H1 (cell line): ENCODE measurements at regions of chr6 and their contacts with region 1.

Region 1: DNA sequence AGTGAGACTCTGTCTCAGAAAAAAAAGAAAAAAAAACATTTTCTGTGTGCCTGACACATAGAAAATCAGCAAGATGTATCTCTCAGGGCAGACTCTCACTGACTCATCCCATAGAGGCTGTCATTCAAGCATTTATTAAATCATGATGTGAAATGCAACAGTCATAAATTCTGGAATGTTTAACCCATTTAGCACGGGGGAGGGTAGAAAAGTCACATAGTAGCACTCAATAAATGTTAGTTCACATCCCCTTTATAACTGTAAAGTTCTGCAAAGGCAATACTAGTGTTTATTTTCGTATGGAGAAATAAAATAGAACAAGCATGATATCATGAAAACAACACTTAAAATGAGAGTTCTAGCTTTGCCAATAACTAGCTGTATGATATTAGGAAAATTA is 15.5 kb upstream of the CARMIL1 start:
- DNase-seq: no peak
- H3K4me3 ChIP-seq: no peak overlapping the region
- H3K27ac ChIP-seq: no peak overlapping the region
- H3K4me1 ChIP-seq: no peaks in the 10 kb centered on the region
- H3K27me3 ChIP-seq: no peaks in the 10 kb centered on the region
- CTCF ChIP-seq: no peak
- EP300 ChIP-seq: no peak
- POLR2A ChIP-seq: no peak
- RAD21 ChIP-seq: no peak

Region 2: DNA sequence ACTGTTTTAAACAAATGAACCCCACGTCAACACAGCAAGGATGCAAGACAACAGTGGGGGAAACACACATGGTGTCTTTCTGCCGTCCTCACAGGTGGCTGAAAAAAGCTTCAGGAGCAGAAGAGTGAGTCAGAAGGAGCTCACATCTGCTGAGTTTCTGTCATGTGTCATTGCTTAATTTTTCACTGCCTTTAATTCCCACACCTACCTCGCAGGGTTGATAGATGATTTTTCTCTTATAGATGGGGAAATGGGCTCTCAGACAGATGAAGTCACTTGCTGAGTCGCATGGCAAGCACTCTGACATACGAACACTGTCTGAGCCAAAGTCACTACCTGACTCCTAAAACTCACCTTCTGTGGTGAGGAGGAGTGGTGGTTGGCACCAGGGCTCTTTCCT is 12.8 kb before region 1 on chr6:
- CTCF ChIA-PET with region 1: interaction called, 21 read pairs
- POLR2A ChIA-PET with region 1: interaction called, 3 read pairs
- DNase-seq: no peak
- H3K4me3 ChIP-seq: no peak overlapping the region
- H3K27ac ChIP-seq: no peak overlapping the region
- H3K4me1 ChIP-seq: no peaks in the 10 kb centered on the region
- H3K27me3 ChIP-seq: no peaks in the 10 kb centered on the region
- CTCF ChIP-seq: no peak
- EP300 ChIP-seq: no peak
- POLR2A ChIP-seq: no peak
- RAD21 ChIP-seq: no peak

Region 3: GRCh38 chr6:25472306-25472705 is 208.6 kb after region 1 on chr6:
- CTCF ChIA-PET with region 1: interaction called, 11 read pairs
- POLR2A ChIA-PET with region 1: no interaction called
- DNase-seq: no peak
- H3K4me3 ChIP-seq: no peak overlapping the region
- H3K27ac ChIP-seq: no peak overlapping the region
- H3K4me1 ChIP-seq: peaks cover 0 to under 1% (median 0%) of the 10 kb centered on the region in 4 experiments; a peak in 2 of 7 replicates
- H3K27me3 ChIP-seq: peaks cover 0 to 1% (median 0%) of the 10 kb centered on the region in 4 experiments; a peak in 1 of 7 replicates
- CTCF ChIP-seq: peak in 1 of 3 experiments; percentile 26; a peak in 2 of 4 replicates
- EP300 ChIP-seq: no peak
- POLR2A ChIP-seq: no peak
- RAD21 ChIP-seq: peak; percentile 13 to 28; a peak in 1 of 4 replicates

Region 4: DNA sequence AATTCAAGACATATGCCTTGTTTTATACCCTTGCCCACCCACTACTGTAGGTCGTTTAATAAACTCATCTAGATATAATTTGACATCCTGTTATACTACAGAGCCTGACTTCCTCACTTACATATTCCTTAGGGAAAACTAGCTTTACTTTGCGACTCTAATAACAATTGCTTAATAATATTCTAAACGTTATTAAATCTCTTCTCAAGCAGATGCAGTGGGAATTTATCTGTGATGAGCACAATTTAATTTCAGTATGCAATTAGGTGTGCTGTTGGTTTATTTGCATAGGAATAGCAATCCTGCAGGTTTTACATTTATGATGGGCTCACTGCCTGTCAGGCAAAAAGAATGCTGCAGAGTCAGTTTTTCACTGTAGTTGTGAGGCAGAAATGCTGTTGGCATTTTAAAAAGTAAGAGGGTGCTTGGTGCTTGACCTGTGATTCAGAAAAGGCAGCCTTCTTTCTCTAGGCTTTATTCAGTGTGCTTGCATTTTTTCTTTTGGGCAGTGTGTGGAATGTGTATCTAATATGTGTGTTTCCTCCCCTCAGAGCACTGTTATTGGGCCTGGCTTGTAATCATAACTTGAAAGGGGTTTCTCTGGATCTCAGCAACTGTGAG is 236.1 kb after region 1 on chr6:
- CTCF ChIA-PET with region 1: interaction called, 13 read pairs
- POLR2A ChIA-PET with region 1: interaction called, 3 read pairs
- DNase-seq: no peak
- H3K4me3 ChIP-seq: no peak overlapping the region
- H3K27ac ChIP-seq: no peak overlapping the region
- H3K4me1 ChIP-seq: peaks cover 0 to 9% (median under 1%) of the 10 kb centered on the region in 4 experiments; a peak in 5 of 7 replicates
- H3K27me3 ChIP-seq: no peaks in the 10 kb centered on the region
- CTCF ChIP-seq: no peak
- EP300 ChIP-seq: no peak
- POLR2A ChIP-seq: no peak
- RAD21 ChIP-seq: no peak

Region 5: DNA sequence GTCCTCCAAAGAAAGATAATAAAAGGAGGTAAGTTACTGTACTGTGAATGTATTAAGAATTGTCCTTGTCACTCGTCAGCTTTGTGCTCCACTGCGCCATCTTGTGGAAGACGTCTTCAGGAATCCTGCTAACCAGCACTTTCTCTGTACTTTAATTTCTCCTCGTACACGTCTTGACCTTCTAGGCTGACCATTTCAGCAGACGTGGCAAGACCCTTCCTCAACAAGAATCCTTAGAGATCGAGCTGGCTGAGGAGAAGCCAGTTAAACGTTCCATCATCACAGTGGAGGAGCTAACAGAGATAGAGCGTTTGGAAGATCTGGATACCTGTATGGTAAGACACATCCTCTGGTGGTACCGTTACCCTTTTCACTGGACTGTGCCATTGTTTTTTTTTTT is 292.9 kb after region 1 on chr6:
- CTCF ChIA-PET with region 1: interaction called, 27 read pairs
- POLR2A ChIA-PET with region 1: no interaction called
- DNase-seq: peak; percentile 38 to 93
- H3K4me3 ChIP-seq: no peak overlapping the region
- H3K27ac ChIP-seq: no peak overlapping the region
- H3K4me1 ChIP-seq: peaks cover 0 to 2% (median 0%) of the 10 kb centered on the region in 4 experiments; a peak in 1 of 7 replicates
- H3K27me3 ChIP-seq: peaks cover 0 to 1% (median 0%) of the 10 kb centered on the region in 4 experiments; a peak in 1 of 7 replicates
- CTCF ChIP-seq: peak; percentile 54 to 85 (median 76)
- EP300 ChIP-seq: no peak
- POLR2A ChIP-seq: no peak
- RAD21 ChIP-seq: peak; percentile 62 to 64